ENCODE measurements at regions of chr12 and their contacts with region 1.

Region 1: GRCh38 chr12:68865399-68866164 is 57.6 kb downstream of the MDM2 start:
- DNase-seq: no peak
- H3K4me3 ChIP-seq: no peak overlapping the region
- H3K27ac ChIP-seq: no peak overlapping the region
- H3K4me1 ChIP-seq: peaks cover 6% of the 10 kb centered on the region
- H3K27me3 ChIP-seq: no peaks in the 10 kb centered on the region
- CTCF ChIP-seq: no peak

Region 2: GRCh38 chr12:69070319-69071090 is 204.9 kb after region 1 on chr12:
- CTCF ChIA-PET with region 1: no interaction called
- dilution Hi-C with region 1: no loop called
- in situ Hi-C with region 1: loop called (anchors 5 kb)
- intact Hi-C with region 1: loop called (anchors 1 kb)
- DNase-seq: peak; percentile 50
- H3K4me3 ChIP-seq: no peak overlapping the region
- H3K27ac ChIP-seq: no peak overlapping the region
- H3K4me1 ChIP-seq: peaks cover 10% of the 10 kb centered on the region
- H3K27me3 ChIP-seq: peaks cover 3% of the 10 kb centered on the region
- CTCF ChIP-seq: peak; percentile 91 to 94

Region 3: GRCh38 chr12:69130064-69130463 is 264.5 kb after region 1 on chr12:
- CTCF ChIA-PET with region 1: no interaction called
- dilution Hi-C with region 1: no loop called
- in situ Hi-C with region 1: no loop called
- intact Hi-C with region 1: loop called (anchors 5 kb)
- DNase-seq: no peak
- H3K4me3 ChIP-seq: no peak overlapping the region
- H3K27ac ChIP-seq: no peak overlapping the region
- H3K4me1 ChIP-seq: no peaks in the 10 kb centered on the region
- H3K27me3 ChIP-seq: no peaks in the 10 kb centered on the region
- CTCF ChIP-seq: peak; percentile 22 to 41

Region 4: DNA sequence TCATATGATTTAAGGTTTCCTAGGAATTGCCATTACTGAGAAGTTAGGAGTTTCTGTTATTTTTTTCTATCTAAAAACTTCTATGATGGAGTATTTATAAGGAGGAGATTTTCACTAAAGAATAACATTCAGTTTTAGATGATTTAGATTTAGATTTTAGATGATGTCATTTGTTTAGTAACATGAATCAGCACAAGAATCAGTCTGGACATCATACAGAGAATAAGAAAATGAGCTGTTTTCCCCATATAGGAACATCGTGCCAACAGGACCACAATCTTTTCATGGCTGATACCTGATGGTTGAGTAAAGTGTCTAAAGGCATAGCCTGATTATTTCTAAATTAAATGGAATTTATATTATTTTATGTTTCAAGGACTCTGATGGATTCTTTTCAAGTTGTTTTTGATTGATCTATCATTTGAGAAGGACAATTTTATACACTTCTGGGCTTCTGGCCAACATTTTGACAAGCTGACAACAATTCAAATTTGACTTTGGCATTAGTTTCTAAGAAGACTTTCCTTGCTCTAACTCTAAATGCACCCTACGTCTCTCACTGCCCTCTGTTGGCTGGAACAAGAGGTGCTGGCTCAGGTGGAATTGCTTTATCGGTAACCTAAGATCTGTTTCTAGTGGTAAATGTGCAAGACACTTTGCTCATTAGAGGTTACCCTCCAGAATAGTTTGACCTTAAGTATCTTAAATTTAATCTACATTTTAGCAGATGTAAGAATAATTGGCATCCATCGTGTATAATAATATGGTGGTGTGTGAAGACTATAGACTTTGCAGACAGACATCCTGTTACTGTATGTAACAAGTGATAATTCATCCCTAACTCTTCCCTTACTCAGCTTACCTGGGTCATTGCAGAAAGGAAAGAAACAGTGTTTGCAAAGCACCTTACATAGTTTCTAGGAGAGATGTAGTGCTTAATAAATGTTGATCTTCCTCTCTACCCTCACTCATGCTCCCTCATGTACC is 331.0 kb after region 1 on chr12:
- CTCF ChIA-PET with region 1: no interaction called
- dilution Hi-C with region 1: no loop called
- in situ Hi-C with region 1: no loop called
- intact Hi-C with region 1: loop called (anchors 5 kb)
- DNase-seq: peak; percentile 5
- H3K4me3 ChIP-seq: no peak overlapping the region
- H3K27ac ChIP-seq: no peak overlapping the region
- H3K4me1 ChIP-seq: no peaks in the 10 kb centered on the region
- H3K27me3 ChIP-seq: no peaks in the 10 kb centered on the region
- CTCF ChIP-seq: peak; percentile 51 to 64

Measured in mammary epithelial cell (primary cell).